Activated T-helper 1 cell treated with anti-CD3 and anti-CD28 coated beads, Interleukin-12 subunit alpha, Interleukin-12 subunit beta, Interleukin-2, Interleukin-4 antibody, amounts not matched to agents 30 ng/mL and 10 ng/mL and 1 ng/mL, durations not matched to agents 14 hours and 24 hours and 36 hours (primary cell): ENCODE measurements at regions of chr7 and their contacts with region 1.

Region 1: DNA sequence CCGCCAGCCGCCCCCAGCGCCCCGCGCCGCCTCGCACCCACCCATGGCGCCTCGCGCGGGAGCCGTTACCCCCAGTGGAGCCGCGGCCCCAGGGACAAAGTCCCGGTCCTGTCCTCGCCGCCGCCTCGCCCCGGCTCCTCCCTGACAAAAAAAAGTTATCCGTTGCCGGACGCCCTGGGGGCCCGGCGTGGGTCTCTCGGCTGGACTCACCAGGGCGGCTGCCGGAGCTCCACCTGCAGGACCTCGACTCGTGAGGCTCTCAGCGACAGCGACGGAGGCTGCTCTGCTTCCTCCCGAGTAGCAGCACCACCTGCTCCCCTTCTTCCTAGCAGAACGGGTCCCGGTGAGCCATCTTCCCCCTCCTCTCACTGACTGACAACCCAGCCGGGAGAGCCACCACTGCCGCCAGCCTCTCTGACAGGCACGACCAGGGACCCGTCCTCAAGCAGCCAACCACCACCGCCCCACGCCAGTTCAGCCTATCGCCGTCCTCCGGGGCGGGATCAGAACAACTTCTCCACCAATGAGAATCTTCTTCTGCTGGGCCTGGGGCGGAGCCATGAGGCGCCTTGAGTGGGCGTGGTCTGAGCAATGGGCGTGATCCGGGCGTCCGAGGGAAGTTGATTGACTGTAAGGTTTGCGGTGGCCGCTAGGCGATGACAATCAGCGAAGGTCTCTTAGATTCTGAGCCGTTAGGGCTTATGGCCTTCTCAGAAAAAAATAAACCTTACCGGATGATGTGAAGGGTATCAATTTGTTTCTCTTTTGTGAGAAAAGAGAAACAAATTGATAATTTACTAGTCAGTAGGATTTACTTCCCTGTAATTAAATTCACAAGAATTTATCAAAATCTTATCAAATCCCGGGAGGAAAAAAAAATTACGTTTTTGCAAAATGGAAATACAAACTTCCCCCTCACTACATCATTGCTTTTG is at the start of gene HYCC1:
- DNase-seq: peak; percentile 99
- H3K4me3 Mint-ChIP-seq: peak within 1 kb of the TSS; percentile 93
- H3K27ac Mint-ChIP-seq: peak within 1 kb of the TSS; percentile 94
- H3K4me1 Mint-ChIP-seq: peaks cover 34% of the 10 kb centered on the region
- H3K27me3 Mint-ChIP-seq: no peaks in the 10 kb centered on the region
- total RNA-seq, gene HYCC1: 36.8 and 45.7 TPM in 2 replicates

Region 2: GRCh38 chr7:21365866-21366624 is 1647.9 kb before region 1 on chr7:
- intact Hi-C with region 1: loop called (anchors 10 kb)
- DNase-seq: no peak
- H3K4me3 Mint-ChIP-seq: peak overlapping the region; percentile 9
- H3K27ac Mint-ChIP-seq: peak overlapping the region; percentile 25
- H3K4me1 Mint-ChIP-seq: peaks cover 70% of the 10 kb centered on the region
- H3K27me3 Mint-ChIP-seq: no peaks in the 10 kb centered on the region

Region 3: GRCh38 chr7:22559829-22560489 is 454.0 kb before region 1 on chr7:
- intact Hi-C with region 1: loop called (anchors 5 kb)
- DNase-seq: peak; percentile 55
- H3K4me3 Mint-ChIP-seq: no peak overlapping the region
- H3K27ac Mint-ChIP-seq: no peak overlapping the region
- H3K4me1 Mint-ChIP-seq: peaks cover 44% of the 10 kb centered on the region
- H3K27me3 Mint-ChIP-seq: peaks cover 9% of the 10 kb centered on the region

Region 4: DNA sequence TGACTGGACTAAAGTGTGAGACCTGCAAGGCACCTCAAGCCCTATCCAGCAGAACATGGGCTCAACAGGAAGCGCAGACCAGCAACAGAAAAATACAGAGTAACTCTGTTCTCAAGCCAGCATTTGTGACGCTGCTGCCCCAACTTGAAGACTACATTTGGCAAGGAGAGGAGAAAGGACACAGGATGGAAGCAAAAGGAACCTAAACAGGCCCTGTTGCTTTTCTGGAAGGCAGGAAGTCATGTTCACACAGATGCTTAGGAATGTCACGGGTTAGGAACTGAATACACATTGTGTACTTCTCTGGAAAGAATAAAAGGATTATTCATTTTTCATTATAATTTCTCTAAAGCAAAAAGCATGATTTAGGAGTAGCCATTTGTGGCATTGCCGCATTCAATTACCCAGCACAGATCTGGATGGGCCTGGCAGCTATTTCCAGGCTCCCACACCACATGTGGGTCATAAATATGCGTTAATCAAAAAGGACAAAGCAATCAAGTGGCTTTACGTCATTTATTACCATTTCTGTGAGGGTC is 171.5 kb before region 1 on chr7:
- intact Hi-C with region 1: no loop called
- DNase-seq: no peak
- H3K4me3 Mint-ChIP-seq: no peak overlapping the region
- H3K27ac Mint-ChIP-seq: no peak overlapping the region
- H3K4me1 Mint-ChIP-seq: no peaks in the 10 kb centered on the region
- H3K27me3 Mint-ChIP-seq: peaks cover 6% of the 10 kb centered on the region

Region 5: DNA sequence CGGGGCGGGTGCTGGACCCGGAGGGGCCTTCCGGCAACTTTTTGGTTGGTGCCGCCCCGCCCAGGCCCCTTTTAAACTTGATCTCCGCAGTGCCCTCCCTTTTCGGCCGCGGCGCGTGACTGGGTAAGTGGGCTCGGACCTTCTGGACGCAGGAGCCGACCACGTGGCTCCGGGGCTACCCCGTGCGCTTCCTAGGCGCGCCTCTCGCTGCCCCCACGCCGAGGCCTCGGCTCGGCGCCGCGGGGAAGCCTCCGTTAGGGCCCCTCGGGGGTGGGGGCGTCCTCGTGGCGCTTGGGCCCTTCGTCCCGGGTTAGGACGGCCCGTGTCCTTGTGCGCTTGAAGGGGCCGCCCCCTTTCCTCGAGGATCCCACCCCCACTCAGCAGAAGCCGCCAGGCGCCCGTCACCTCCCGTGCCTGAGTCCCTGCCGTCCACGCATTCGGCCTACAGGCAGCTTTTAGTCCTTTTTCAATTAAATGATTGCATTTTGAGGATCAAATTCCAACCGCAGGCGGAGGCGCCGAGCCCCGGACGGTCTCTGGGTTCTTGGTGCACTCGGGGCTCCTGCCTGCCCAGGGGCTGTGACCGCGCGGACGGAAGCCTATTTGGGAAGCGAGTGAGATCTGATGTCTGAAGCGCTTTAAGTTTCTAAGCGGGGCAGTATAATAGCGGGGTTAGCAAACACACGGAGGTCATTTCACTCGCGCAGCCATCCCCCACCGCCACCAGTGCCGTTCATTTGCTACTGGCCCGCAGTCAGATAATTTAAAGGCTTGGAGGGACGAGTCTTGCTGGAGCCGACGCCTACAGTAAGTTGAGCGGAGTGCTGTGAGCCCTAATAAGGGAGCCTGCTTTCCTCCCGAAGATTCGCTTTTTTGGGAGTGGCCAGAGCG is 159.6 kb before region 1 on chr7:
- intact Hi-C with region 1: loop called (anchors 1 kb)
- DNase-seq: peak; percentile 75
- H3K4me3 Mint-ChIP-seq: peak overlapping the region; percentile 98
- H3K27ac Mint-ChIP-seq: peak overlapping the region; percentile 96
- H3K4me1 Mint-ChIP-seq: peaks cover 34% of the 10 kb centered on the region
- H3K27me3 Mint-ChIP-seq: peaks cover 3% of the 10 kb centered on the region

Region 6: DNA sequence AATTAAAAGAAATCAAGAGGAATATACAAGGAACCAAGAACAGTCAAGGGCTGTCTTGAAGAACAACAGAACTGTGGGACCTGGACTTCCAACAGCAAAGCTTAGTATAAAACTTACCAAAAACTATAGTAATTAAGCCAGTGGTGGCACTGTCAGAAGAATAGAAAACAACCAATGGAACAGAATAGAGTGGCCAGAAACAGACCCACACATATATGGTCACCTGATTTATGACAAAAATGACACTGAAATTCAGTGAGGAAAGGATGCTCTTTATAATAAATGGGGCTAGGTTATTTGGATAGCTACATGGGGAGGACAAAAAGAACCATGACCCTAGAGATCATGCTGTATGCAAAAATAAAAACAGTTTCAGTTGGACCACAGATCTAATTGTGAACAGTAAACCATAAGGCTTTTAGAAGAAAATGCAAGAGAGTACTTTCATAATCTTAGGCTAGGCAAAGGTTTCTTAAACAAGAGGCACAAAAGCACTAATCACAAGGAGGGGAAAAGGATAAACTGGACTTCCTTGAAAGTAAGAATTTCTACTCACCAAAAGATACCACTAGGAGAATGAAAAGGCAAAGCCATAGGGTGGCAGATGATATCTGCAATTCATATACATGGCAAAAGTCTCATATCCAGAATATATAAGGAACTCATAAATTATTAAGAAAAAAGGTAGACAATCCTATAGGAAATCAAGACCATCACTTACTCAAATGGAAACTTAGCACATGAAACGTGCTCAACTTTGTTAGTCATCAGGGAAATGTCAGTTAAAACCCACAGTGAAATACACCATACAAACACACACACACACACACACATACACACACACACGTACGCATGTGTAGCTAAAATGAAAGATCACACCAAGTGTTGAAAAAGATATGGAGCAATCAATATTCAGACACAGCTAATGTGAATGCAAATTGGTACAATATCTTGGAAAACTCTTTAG is 20.8 kb before region 1 on chr7:
- intact Hi-C with region 1: loop called (anchors 1 kb)
- DNase-seq: no peak
- H3K4me3 Mint-ChIP-seq: peak overlapping the region; percentile 43
- H3K27ac Mint-ChIP-seq: peak overlapping the region; percentile 77
- H3K4me1 Mint-ChIP-seq: peaks cover 52% of the 10 kb centered on the region
- H3K27me3 Mint-ChIP-seq: no peaks in the 10 kb centered on the region

Region 7: GRCh38 chr7:23105644-23106056 is 91.7 kb after region 1 on chr7 and contains the start of gene KLHL7:
- intact Hi-C with region 1: loop called (anchors 2 kb)
- DNase-seq: peak; percentile 95
- H3K4me3 Mint-ChIP-seq: peak within 1 kb of the TSS; percentile 94
- H3K27ac Mint-ChIP-seq: peak within 1 kb of the TSS; percentile 96
- H3K4me1 Mint-ChIP-seq: peaks cover 30% of the 10 kb centered on the region
- H3K27me3 Mint-ChIP-seq: no peaks in the 10 kb centered on the region
- total RNA-seq, gene KLHL7: 18.2 and 19.7 TPM in 2 replicates

Region 8: GRCh38 chr7:23346316-23346715 is 332.3 kb after region 1 on chr7:
- intact Hi-C with region 1: no loop called
- DNase-seq: no peak
- H3K4me3 Mint-ChIP-seq: peak overlapping the region; percentile 76
- H3K27ac Mint-ChIP-seq: peak overlapping the region; percentile 27
- H3K4me1 Mint-ChIP-seq: peaks cover 31% of the 10 kb centered on the region
- H3K27me3 Mint-ChIP-seq: peaks cover 16% of the 10 kb centered on the region

Region 9: GRCh38 chr7:24245362-24245761 is 1231.4 kb after region 1 on chr7:
- intact Hi-C with region 1: no loop called
- DNase-seq: no peak
- H3K4me3 Mint-ChIP-seq: no peak overlapping the region
- H3K27ac Mint-ChIP-seq: no peak overlapping the region
- H3K4me1 Mint-ChIP-seq: no peaks in the 10 kb centered on the region
- H3K27me3 Mint-ChIP-seq: peaks cover 6% of the 10 kb centered on the region